Right ventricle myocardium inferior (tissue), 1 donor: ENCODE measurements at regions of chr11 and their contacts with region 1.

Region 1: DNA sequence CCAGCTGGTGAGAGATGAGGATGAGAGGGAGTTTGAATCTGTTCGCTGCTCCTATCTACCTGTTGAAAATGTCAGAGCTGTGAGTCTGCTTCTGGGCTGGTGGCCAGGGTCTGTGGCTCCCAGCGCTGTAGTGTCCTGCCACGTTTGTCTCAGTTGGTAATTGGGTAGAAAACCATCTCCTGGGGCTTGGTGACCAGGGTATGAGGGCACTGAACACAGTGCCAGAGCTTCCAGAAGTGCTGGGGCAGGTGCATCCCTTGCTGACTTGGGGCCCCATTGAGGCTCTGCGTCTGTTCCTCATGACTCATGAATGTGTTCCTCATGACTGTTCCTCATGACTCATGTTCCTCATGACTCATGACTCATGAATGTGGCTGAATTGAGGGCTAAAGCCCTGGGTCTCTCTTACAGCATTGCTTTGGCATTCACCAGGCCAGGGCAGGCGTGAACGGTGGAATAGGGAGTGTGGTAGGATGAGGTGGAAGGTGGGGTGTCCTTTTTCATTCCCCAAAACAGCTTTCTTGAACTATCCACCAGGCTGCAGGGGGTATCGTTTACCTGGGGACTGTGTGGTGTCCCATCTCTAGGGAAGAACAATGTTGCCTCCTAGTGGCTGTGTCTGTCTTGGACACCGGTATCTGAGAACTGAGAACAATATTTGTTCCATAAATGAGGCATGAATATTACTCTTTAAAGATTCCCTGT is 139.5 kb downstream of the COMMD9 start:
- DNase-seq: peak; percentile 58
- ATAC-seq: peak; percentile 46

Region 2: DNA sequence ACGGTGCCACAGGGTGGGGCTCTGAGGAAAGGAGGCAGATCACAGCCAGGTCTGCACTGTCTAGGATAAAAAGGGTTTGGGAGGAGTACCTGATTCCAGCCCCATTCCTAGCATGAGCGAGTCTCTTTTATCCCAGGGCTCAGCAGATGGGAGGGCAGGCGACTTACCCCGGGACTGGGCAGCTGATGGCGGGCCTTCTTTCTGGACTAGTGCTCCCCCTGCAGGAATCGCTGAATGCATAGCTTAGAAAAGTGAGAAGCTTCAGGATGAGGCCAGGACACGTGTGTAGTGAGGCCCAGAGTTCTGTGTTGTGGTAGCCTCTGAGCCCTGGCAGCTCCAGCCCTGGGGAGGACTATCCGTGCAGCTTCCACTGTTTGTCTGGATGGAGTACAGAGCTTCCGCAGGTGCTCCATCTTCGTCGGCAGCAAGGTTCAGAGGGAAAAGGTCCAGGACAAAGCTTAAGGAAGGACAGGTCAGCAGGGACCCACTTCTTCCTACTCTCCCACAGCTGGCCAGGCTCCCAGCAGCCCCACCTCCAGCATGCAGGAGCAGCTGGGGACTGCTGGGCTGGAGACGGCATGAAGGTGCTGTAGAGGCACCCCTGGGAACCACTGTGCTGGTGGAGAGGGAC is 109.2 kb after region 1 on chr11:
- intact Hi-C with region 1: loop called (anchors 10 kb)
- DNase-seq: no peak
- ATAC-seq: peak; percentile 60